ENCODE measurements at regions of chr1 and their contacts with region 1.

Region 1: GRCh38 chr1:157490467-157491165 is 61.7 kb downstream of the FCRL5 start:
- DNase-seq: peak; percentile 61 to 89
- ATAC-seq: peak; percentile 84

Region 2: GRCh38 chr1:157199421-157199755 is 291.2 kb before region 1 on chr1:
- intact Hi-C with region 1: loop called (anchors 5 kb)
- DNase-seq: no peak
- ATAC-seq: no peak

Region 3: GRCh38 chr1:157301477-157302198 is 189.0 kb before region 1 on chr1:
- intact Hi-C with region 1: no loop called
- DNase-seq: no peak
- ATAC-seq: no peak

Region 4: DNA sequence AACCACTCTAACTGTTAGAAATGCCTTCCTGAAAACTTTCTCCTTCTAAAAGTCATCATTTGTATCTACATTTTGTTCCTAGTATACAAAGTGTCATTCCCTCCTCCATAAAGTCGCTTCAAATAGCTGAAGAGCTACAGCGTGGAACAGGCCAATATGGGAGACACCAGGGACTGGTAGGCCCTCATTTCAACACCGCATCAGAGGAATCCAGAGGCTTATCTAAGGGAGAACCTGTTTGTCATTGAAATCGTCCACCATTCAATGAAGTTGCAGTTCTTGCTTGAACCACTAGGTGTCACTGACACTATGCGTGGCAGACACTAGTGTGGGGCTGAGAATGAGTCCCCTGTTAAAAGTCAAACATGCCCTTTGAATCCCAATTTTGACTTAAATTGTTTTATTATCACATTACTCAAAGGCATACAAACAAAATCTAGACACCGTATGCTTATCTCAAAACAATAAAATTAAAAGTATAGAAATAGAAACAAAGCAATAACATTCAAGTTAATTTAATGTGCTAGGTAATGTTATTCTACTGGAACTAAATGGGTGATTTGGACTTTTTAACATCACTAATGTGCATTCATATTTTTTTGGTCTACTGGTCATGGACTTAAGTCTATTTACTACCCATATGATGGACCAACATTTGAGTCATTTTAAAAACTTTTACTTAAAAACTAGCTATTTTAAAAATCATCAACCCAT is 120.7 kb before region 1 on chr1:
- intact Hi-C with region 1: loop called in 1 of 2 experiments (anchors 5 kb)
- DNase-seq: peak; percentile 34 to 39
- ATAC-seq: peak; percentile 84